PC-3 (cell line): ENCODE measurements at regions of chr10 and their contacts with region 1.

Region 1: DNA sequence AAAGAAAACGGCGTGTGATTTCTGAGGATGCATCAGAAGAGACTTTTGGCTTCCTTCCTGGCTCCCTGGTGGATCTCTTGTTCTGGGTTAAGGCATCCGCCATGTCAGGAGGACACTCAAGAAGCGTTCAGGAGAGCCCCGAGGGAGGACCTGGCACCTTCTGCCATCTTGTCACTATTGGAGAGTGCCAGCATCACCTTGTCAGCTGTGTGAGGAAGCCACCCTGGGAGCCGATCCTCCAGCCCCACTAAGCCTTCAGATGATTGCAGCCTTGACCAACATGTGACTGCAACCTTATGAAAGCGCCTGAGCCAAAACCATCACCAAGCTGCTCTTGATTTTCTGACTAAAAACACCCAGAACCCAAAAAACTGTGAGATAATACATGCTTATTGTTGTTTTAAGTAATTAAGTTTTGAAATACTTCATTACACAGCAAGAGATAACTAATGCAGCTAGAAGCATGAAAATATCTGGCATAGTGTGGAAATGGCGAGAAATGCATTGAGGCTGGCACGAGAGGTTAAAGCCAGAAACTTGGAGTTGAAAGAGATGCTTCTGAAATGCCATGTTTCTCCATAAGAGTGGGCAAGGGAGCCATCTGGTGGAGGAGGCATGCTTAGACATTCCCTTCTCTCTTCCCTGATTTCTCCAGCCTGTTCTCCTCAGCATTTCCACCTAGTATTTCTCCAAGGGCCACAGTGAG is 5.4 kb upstream of the ZFYVE27 start:
- DNase-seq: peak; percentile 74
- ATAC-seq: peak; percentile 75
- H3K4me3 ChIP-seq: no peak overlapping the region
- H3K27ac ChIP-seq: no peak overlapping the region
- H3K4me1 ChIP-seq: peaks cover 6% of the 10 kb centered on the region
- H3K27me3 ChIP-seq: no peaks in the 10 kb centered on the region
- CTCF ChIP-seq: peak; percentile 82

Region 2: GRCh38 chr10:97676770-97677581 is 54.5 kb before region 1 on chr10:
- CTCF ChIA-PET with region 1: interaction called, 3 read pairs
- POLR2A ChIA-PET with region 1: no interaction called
- intact Hi-C with region 1: loop called (anchors 2 kb)
- DNase-seq: peak; percentile 51
- ATAC-seq: peak; percentile 71
- H3K4me3 ChIP-seq: no peak overlapping the region
- H3K27ac ChIP-seq: no peak overlapping the region
- H3K4me1 ChIP-seq: peaks cover 6% of the 10 kb centered on the region; the same call in 1 of the 2 replicates
- H3K27me3 ChIP-seq: no peaks in the 10 kb centered on the region
- CTCF ChIP-seq: peak; percentile 64

Region 3: GRCh38 chr10:97686962-97687784 is 44.3 kb before region 1 on chr10 and contains the start of gene AVPI1:
- CTCF ChIA-PET with region 1: interaction called, 3 read pairs
- POLR2A ChIA-PET with region 1: interaction called, 7 read pairs
- intact Hi-C with region 1: loop called (anchors 2 kb)
- DNase-seq: peak; percentile 97
- ATAC-seq: peak; percentile 84
- H3K4me3 ChIP-seq: peak within 1 kb of the TSS; percentile 92
- H3K27ac ChIP-seq: peak within 1 kb of the TSS; percentile 69
- H3K4me1 ChIP-seq: peaks cover 59% of the 10 kb centered on the region
- H3K27me3 ChIP-seq: no peaks in the 10 kb centered on the region
- CTCF ChIP-seq: no peak
- total RNA-seq, gene AVPI1: 40.7 and 44.5 TPM in 2 replicates

Region 4: GRCh38 chr10:97701438-97702069 is 29.9 kb before region 1 on chr10:
- CTCF ChIA-PET with region 1: no interaction called
- POLR2A ChIA-PET with region 1: no interaction called
- intact Hi-C with region 1: loop called (anchors 2 kb)
- DNase-seq: peak; percentile 76
- ATAC-seq: peak; percentile 98
- H3K4me3 ChIP-seq: no peak overlapping the region
- H3K27ac ChIP-seq: no peak overlapping the region
- H3K4me1 ChIP-seq: no peaks in the 10 kb centered on the region
- H3K27me3 ChIP-seq: no peaks in the 10 kb centered on the region
- CTCF ChIP-seq: peak; percentile 77

Region 5: DNA sequence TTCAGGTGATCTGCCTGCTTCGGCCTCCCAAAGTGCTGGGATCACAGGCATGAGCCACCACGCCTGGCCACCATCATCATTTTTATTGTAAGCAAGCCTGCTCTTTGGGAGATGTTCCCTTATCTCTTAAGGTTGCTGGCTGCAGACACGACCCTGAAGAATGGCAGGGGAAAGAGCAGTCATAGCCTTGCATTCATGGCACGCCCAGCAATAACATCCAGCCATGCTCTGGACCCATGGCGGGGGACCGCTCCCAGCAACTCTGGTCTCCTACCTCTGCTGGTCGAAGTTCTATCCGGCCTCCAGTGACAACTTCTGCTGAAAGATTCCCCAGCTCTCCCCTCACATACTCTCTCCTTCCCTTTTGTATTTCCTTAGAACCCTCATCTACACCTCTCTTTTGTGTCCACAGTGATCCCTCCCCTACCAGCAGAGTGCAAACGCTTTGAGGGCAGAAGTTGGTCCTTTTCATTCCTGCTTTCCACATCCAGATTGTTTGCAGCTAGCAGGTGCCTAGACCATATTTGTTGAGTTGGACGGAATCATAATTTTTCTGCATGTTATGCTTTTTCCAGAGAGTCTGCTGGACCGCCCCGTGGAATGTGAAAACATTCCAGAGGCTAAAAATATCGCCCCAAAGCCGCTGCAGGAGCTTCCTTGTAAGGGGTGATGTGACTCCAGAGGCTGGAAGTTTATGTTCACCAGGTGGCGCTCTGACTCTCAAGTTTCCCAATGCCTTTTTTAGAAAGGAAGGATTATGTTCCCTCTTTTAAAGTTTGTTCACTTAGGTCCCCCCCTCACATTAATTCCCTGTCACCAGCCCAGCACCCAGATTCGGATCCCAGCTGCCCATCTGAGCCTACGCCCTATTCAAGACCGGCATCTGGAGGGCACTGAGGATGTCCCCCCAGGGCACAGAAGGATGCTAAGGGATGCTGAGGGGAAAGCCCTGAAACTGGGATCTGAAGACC is 22.2 kb before region 1 on chr10:
- CTCF ChIA-PET with region 1: interaction called, 5 read pairs
- POLR2A ChIA-PET with region 1: interaction called, 3 read pairs
- intact Hi-C with region 1: loop called (anchors 1 kb)
- DNase-seq: peak; percentile 69
- ATAC-seq: peak; percentile 7; the same call in 1 of the 2 replicates
- H3K4me3 ChIP-seq: no peak overlapping the region
- H3K27ac ChIP-seq: no peak overlapping the region
- H3K4me1 ChIP-seq: peaks cover 5% of the 10 kb centered on the region; the same call in 1 of the 2 replicates
- H3K27me3 ChIP-seq: no peaks in the 10 kb centered on the region
- CTCF ChIP-seq: peak; percentile 82